Activated T-helper 2 cell treated with anti-CD3 and anti-CD28 coated beads, Interferon-gamma antibody, Interleukin-2, Interleukin-4, amounts not matched to agents 10 μg/mL and 5 μg/mL and 100 μg/mL, durations not matched to agents 14 hours and 24 hours and 36 hours (primary cell): ENCODE measurements at regions of chr3 and their contacts with region 1.

Region 1: DNA sequence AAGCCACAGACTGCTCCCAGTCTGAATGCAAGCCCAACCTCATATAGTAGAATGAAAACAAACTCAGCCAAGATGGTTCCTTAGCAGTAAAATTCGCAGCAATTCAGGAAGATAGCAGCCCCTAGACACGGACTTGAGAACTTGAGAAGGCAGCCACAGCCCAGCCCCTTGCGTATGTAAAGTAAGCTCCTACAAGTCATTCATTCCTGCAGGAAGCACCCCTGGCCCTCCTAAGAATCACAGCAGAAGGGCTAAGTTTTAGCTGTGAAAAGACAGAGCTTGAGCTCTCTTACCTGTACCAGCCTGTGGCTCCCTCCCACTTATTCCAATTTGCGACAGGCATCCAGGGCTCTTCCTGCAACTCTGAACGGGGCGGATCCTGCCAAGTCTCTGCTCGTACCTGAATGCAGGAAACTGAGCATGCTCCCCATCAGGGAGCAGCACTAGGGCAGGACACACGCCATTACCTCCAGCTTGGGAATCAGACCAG is 136.4 kb downstream of the MAGI1 start:
- DNase-seq: no peak
- H3K4me3 Mint-ChIP-seq: no peak overlapping the region
- H3K27ac Mint-ChIP-seq: no peak overlapping the region
- H3K4me1 Mint-ChIP-seq: no peaks in the 10 kb centered on the region
- H3K27me3 Mint-ChIP-seq: no peaks in the 10 kb centered on the region

Region 2: GRCh38 chr3:66038726-66039589 is 136.6 kb after region 1 on chr3 and contains the start of gene MAGI1:
- intact Hi-C with region 1: loop called (anchors 5 kb)
- DNase-seq: peak; percentile 46
- H3K4me3 Mint-ChIP-seq: peak within 1 kb of the TSS; percentile 92
- H3K27ac Mint-ChIP-seq: peak within 1 kb of the TSS; percentile 89
- H3K4me1 Mint-ChIP-seq: peaks cover 10% of the 10 kb centered on the region
- H3K27me3 Mint-ChIP-seq: peaks cover 59% of the 10 kb centered on the region
- total RNA-seq, gene MAGI1: 10.8 and 11.0 TPM in 2 replicates